ENCODE measurements at regions of chr1 and their contacts with region 1.

Region 1: GRCh38 chr1:26210147-26210870 is 19.9 kb downstream of the CATSPER4 start:
- DNase-seq: no peak

Region 2: DNA sequence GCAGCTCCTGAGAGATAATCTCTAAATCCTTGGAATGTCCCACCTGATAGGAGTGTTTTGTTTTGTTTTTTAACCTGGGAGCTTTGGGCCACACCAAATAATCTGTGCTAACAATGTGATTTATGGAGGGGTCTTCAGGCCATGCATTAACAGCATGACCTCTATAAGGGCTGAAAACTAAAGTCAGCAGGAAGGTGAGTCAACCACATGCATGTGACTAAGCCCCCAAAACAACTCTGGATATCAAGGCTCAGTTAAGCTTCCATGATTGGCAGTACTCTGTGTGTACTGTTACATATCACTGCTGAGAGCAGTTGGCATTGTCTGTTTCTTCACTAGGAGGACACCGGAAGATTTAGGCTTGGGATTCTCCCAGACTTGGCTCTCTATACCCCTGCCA is 361.8 kb before region 1 on chr1:
- CTCF ChIA-PET with region 1: interaction called, 10 read pairs
- POLR2A ChIA-PET with region 1: no interaction called
- DNase-seq: no peak

Region 3: DNA sequence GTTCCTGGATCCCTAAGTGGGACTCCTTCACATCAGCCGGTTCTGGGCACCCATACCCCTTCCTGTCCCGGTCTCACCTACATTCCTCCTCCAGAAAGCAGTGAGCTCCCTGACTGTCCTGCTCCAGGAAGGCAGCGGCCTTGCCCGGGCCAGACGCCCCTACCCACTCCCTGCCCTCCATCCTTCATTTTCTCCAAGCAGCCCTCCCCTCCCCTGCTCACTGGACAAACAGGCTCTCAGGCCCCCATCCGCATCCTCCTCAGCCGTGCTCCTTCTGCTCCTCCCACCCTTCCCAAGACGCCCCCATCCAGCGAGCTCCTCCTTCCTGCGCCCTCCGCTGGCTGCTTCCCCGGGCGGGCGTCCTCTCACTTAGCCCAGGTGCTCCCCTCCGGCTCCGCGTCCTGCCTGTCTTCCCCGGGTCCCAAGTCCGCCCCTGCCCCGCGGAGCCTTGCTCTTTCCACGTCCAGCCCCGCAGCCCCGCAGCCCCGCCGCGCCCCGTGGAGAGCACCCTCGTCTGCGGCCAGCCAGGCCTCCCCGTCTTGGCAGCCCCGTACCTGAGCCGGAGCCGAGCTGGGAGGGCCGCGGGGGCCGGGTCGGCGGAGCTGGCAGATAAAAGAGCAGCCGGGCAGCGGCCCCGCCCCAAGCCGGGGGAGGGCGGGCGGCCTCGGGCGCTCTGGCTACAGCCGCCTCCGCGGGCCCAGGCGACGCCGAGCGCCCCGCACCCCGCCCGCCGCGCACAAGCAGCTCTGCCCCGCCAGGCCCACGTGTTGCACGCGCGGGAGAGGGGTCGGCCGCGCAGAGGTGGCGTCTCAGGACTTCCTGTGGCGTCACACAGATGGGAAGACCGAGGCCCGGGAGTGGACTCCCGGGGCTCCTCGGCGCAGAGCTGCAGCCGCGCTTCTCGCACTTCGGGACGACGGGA is 335.1 kb before region 1 on chr1 and contains the start of gene PAQR7:
- CTCF ChIA-PET with region 1: no interaction called
- POLR2A ChIA-PET with region 1: no interaction called
- DNase-seq: peak; percentile 73

Measured in HEK293T (cell line).